Activated CD8-positive, alpha-beta T cell treated with anti-CD3 and anti-CD28 coated beads for 36 hours (primary cell): ENCODE measurements at regions of chr2 and their contacts with region 1.

Region 1: GRCh38 chr2:13006829-13007717 is 290.3 kb downstream of the TRIB2 start:
- DNase-seq: peak; percentile 68
- ATAC-seq: peak; percentile 79
- H3K4me3 Mint-ChIP-seq: no peak overlapping the region
- H3K27ac Mint-ChIP-seq: no peak overlapping the region
- H3K4me1 Mint-ChIP-seq: peaks cover 2% of the 10 kb centered on the region
- H3K27me3 Mint-ChIP-seq: peaks cover 19% of the 10 kb centered on the region
- CTCF ChIP-seq: peak; percentile 91

Region 2: DNA sequence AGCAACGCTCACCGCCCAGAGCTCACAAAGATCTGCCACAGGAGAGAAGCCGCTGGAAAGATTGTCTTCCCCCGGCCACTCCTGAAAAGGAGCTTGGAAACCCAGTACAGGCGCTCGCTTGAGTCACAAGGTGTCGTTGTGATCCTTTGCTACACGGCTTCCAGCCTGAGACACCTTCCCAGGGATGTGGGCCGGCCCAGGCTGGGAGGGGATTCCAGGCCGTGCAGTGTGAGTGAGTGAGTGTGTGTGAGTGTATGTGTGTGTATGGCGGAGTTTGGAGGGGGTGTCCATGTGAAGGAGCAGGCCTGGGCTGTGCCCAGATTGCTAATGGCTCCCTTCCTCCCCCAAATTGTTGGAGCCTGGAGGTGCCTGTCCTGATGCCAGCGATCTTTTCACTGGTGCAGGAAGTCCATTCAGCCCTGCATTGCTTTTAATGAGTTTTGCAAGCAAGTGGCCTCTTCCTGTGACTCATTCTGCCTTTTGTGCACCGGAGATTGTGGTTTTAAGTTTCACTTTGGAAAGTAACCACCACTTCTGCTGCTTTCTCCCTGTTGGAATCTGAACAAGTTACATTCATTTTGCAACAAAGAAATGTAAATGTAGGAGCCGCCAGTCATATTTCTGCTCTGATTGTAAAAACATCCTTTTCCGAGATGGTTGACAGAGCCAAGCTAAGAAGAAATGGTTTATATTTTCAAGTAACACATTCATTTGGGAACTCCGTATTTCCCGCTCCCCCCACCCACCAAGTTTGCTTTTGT is 1176.9 kb before region 1 on chr2:
- CTCF ChIA-PET with region 1: interaction called, 15 read pairs
- POLR2A ChIA-PET with region 1: no interaction called
- intact Hi-C with region 1: no loop called
- DNase-seq: peak; percentile 69
- ATAC-seq: peak; percentile 78
- H3K4me3 Mint-ChIP-seq: peak overlapping the region; percentile 49
- H3K27ac Mint-ChIP-seq: peak overlapping the region; percentile 72
- H3K4me1 Mint-ChIP-seq: peaks cover 54% of the 10 kb centered on the region
- H3K27me3 Mint-ChIP-seq: peaks cover 15% of the 10 kb centered on the region
- CTCF ChIP-seq: no peak

Region 3: GRCh38 chr2:12416600-12416999 is 590.5 kb before region 1 on chr2:
- CTCF ChIA-PET with region 1: interaction called, 4 read pairs
- POLR2A ChIA-PET with region 1: no interaction called
- intact Hi-C with region 1: loop called (anchors 10 kb)
- DNase-seq: peak; percentile 67
- ATAC-seq: no peak
- H3K4me3 Mint-ChIP-seq: no peak overlapping the region
- H3K27ac Mint-ChIP-seq: no peak overlapping the region
- H3K4me1 Mint-ChIP-seq: peaks cover 30% of the 10 kb centered on the region
- H3K27me3 Mint-ChIP-seq: no peaks in the 10 kb centered on the region
- CTCF ChIP-seq: peak; percentile 41

Region 4: GRCh38 chr2:12728221-12728777 is 278.8 kb before region 1 on chr2:
- CTCF ChIA-PET with region 1: interaction called, 11 read pairs
- POLR2A ChIA-PET with region 1: no interaction called
- intact Hi-C with region 1: no loop called
- DNase-seq: peak; percentile 86
- ATAC-seq: peak; percentile 92
- H3K4me3 Mint-ChIP-seq: peak overlapping the region; percentile 43
- H3K27ac Mint-ChIP-seq: peak overlapping the region; percentile 51
- H3K4me1 Mint-ChIP-seq: peaks cover 63% of the 10 kb centered on the region
- H3K27me3 Mint-ChIP-seq: no peaks in the 10 kb centered on the region
- CTCF ChIP-seq: no peak

Region 5: GRCh38 chr2:12931186-12931844 is 75.8 kb before region 1 on chr2:
- CTCF ChIA-PET with region 1: interaction called, 24 read pairs
- POLR2A ChIA-PET with region 1: no interaction called
- intact Hi-C with region 1: no loop called
- DNase-seq: no peak
- ATAC-seq: peak; percentile 56
- H3K4me3 Mint-ChIP-seq: no peak overlapping the region
- H3K27ac Mint-ChIP-seq: no peak overlapping the region
- H3K4me1 Mint-ChIP-seq: peaks cover 4% of the 10 kb centered on the region
- H3K27me3 Mint-ChIP-seq: peaks cover 11% of the 10 kb centered on the region
- CTCF ChIP-seq: peak; percentile 78

Region 6: GRCh38 chr2:12967804-12968203 is 39.3 kb before region 1 on chr2:
- CTCF ChIA-PET with region 1: interaction called, 18 read pairs
- POLR2A ChIA-PET with region 1: no interaction called
- intact Hi-C with region 1: no loop called
- DNase-seq: no peak
- ATAC-seq: no peak
- H3K4me3 Mint-ChIP-seq: no peak overlapping the region
- H3K27ac Mint-ChIP-seq: no peak overlapping the region
- H3K4me1 Mint-ChIP-seq: peaks cover 26% of the 10 kb centered on the region
- H3K27me3 Mint-ChIP-seq: peaks cover 24% of the 10 kb centered on the region
- CTCF ChIP-seq: no peak

Region 7: GRCh38 chr2:13021470-13021957 is 14.4 kb after region 1 on chr2:
- CTCF ChIA-PET with region 1: interaction called, 27 read pairs
- POLR2A ChIA-PET with region 1: no interaction called
- intact Hi-C with region 1: no loop called
- DNase-seq: no peak
- ATAC-seq: no peak
- H3K4me3 Mint-ChIP-seq: no peak overlapping the region
- H3K27ac Mint-ChIP-seq: no peak overlapping the region
- H3K4me1 Mint-ChIP-seq: no peaks in the 10 kb centered on the region
- H3K27me3 Mint-ChIP-seq: peaks cover 49% of the 10 kb centered on the region
- CTCF ChIP-seq: no peak